IMR-90 (cell line): ENCODE measurements at regions of chr6 and their contacts with region 1.

Region 1: DNA sequence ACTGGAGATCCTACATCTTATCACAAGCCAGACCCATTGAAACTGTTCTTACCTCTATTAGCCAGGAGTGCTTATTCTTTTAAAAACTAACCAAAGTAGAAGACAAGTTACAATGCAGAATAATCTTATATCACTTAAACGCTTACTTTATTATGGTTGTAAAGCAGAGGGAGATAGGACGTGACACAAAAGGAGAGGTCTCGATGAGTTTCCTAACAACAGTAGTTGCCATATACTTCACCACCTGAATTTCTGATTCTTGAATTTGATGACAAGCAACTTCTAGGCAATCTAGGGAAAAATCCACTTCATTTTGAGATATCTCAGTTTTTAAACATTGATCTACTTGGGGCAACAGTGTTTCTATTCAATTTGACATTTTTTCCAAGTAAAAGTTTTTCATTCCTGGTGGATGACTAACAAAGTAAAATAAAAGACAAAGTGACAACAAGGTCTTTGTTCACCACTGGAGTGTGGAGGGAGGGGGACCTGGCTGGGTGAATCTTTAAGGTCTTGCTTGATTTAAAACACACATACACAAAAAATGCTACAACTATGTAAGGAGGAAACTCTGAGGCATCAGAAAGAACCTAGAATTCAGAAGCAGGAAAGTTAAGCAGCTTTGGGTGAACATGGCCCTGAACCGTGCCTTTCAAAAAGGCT is 110.9 kb downstream of the SMLR1 start:
- DNase-seq: peak; percentile 67
- ATAC-seq: peak; percentile 25
- H3K4me3 ChIP-seq: no peak overlapping the region
- H3K27ac ChIP-seq: peak overlapping the region; percentile 69; the same call in 1 of the 2 replicates
- H3K4me1 ChIP-seq: peaks cover 11% of the 10 kb centered on the region
- H3K27me3 ChIP-seq: no peaks in the 10 kb centered on the region
- CTCF ChIP-seq: no peak
- POLR2A ChIP-seq: no peak
- RAD21 ChIP-seq: no peak

Region 2: GRCh38 chr6:131001111-131001736 is 63.2 kb after region 1 on chr6:
- CTCF ChIA-PET with region 1: no interaction called
- POLR2A ChIA-PET with region 1: no interaction called
- dilution Hi-C with region 1: no loop called
- in situ Hi-C with region 1: no loop called
- intact Hi-C with region 1: loop called (anchors 2 kb)
- DNase-seq: no peak
- ATAC-seq: no peak
- H3K4me3 ChIP-seq: no peak overlapping the region
- H3K27ac ChIP-seq: no peak overlapping the region
- H3K4me1 ChIP-seq: peaks cover 28% of the 10 kb centered on the region
- H3K27me3 ChIP-seq: no peaks in the 10 kb centered on the region
- CTCF ChIP-seq: no peak
- POLR2A ChIP-seq: no peak
- RAD21 ChIP-seq: no peak